ENCODE measurements at regions of chr6 and their contacts with region 1.

Region 1: GRCh38 chr6:26196846-26197648 is 109.8 kb downstream of the HFE start:
- DNase-seq: peak; percentile 92 to 93 (median 92)
- H3K4me3 ChIP-seq: peak overlapping the region; percentile 83 to 97
- H3K4me3 Mint-ChIP-seq: peak overlapping the region; percentile 94 to 99 (median 97)
- H3K27ac ChIP-seq: peak overlapping the region; percentile 84
- H3K27ac Mint-ChIP-seq: peak overlapping the region; percentile 96 to 100 (median 98)
- H3K4me1 ChIP-seq: peaks cover 43% of the 10 kb centered on the region
- H3K4me1 Mint-ChIP-seq: peaks cover 23 to 57% (median 41%) of the 10 kb centered on the region in 4 donors
- H3K27me3 ChIP-seq: no peaks in the 10 kb centered on the region
- H3K27me3 Mint-ChIP-seq: no peaks in the 10 kb centered on the region

Region 2: DNA sequence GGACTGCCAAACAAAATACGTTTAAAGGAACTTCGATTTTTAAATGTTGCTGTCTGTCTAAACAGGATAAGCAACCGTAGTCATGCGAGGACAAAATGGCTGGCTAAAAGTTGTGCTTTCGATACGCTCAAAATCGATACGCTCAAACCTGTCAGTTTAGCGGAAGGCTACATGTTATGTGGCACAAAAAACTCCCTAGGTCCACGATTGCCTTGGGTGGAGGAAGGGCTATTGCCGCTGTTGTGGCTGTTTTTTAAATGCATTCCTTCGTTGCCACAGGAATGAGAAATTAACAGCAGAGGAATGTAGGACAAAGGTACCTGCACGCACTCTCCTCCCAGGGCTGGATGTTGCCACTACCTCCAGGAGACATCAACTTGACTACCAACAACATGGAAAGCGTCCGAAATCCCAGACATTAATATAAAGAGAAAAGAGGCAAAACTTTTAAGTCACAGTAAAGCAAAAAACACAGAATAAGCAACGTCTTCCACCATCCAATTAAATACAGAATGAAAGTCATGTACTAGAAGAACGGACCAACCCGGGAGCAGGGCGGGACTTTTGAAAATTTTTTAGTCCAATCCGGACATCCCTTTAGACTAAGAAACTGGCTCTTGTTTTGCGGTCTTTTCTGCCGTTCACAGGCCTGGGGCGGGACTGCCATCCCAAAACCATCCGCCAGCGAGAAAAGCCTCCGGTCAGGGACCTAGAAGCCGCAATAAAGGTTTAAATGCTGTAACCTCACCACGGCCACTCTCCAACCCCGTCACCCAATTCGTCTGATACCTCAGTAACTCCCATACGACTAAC is 142.0 kb before region 1 on chr6:
- CTCF ChIA-PET with region 1: no interaction called
- POLR2A ChIA-PET with region 1: interaction called, 65 read pairs
- intact Hi-C with region 1: no loop called
- DNase-seq: peak; percentile 89 to 96 (median 91)
- H3K4me3 ChIP-seq: peak overlapping the region; percentile 67 to 78
- H3K4me3 Mint-ChIP-seq: peak overlapping the region; percentile 93 to 96 (median 94)
- H3K27ac ChIP-seq: peak overlapping the region; percentile 84
- H3K27ac Mint-ChIP-seq: peak overlapping the region; percentile 91 to 98 (median 98)
- H3K4me1 ChIP-seq: peaks cover 24% of the 10 kb centered on the region
- H3K4me1 Mint-ChIP-seq: peaks cover 7 to 34% (median 15%) of the 10 kb centered on the region in 4 donors
- H3K27me3 ChIP-seq: no peaks in the 10 kb centered on the region
- H3K27me3 Mint-ChIP-seq: no peaks in the 10 kb centered on the region

Region 3: DNA sequence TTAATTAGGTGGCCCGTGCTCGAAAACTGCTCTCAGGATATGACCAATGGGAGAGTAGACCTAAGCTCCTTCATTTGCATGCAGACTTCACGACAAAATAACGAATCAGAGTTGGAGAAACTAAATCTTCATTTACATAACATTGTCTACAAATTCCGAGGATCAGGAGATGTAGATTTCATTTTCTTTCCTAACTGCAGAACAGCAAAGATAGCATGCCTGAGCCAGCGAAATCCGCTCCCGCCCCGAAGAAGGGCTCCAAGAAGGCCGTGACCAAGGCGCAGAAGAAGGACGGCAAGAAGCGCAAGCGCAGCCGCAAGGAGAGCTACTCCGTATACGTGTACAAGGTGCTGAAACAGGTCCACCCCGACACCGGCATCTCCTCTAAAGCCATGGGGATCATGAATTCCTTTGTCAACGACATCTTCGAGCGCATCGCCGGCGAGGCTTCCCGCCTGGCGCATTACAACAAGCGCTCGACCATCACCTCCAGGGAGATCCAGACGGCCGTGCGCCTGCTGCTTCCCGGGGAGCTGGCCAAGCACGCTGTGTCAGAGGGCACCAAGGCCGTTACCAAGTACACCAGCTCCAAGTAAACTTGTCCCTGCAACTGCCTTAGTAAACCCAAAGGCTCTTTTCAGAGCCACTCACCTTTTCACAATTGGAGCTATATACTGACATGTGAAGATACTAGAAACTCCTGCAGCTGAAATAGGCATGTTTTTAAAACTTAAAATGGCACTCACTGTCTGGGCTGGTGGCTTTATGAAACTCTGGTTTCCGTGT is 13.3 kb before region 1 on chr6:
- CTCF ChIA-PET with region 1: interaction called, 54 read pairs
- POLR2A ChIA-PET with region 1: interaction called, 2,476 read pairs
- intact Hi-C with region 1: no loop called
- DNase-seq: peak; percentile 72 to 81 (median 79)
- H3K4me3 ChIP-seq: peak overlapping the region; percentile 2 to 69
- H3K4me3 Mint-ChIP-seq: peak overlapping the region; percentile 90 to 100 (median 96)
- H3K27ac ChIP-seq: peak overlapping the region; percentile 67
- H3K27ac Mint-ChIP-seq: peak overlapping the region; percentile 78 to 99 (median 95)
- H3K4me1 ChIP-seq: peaks cover 45% of the 10 kb centered on the region
- H3K4me1 Mint-ChIP-seq: peaks cover 29 to 54% (median 37%) of the 10 kb centered on the region in 4 donors
- H3K27me3 ChIP-seq: no peaks in the 10 kb centered on the region
- H3K27me3 Mint-ChIP-seq: no peaks in the 10 kb centered on the region

Region 4: GRCh38 chr6:26249957-26250697 is 53.1 kb after region 1 on chr6:
- CTCF ChIA-PET with region 1: interaction called, 12 read pairs
- POLR2A ChIA-PET with region 1: interaction called, 3 read pairs
- intact Hi-C with region 1: no loop called
- DNase-seq: peak; percentile 79 to 88 (median 83)
- H3K4me3 ChIP-seq: peak overlapping the region; percentile 86 to 88
- H3K4me3 Mint-ChIP-seq: peak overlapping the region; percentile 92 to 99 (median 98)
- H3K27ac ChIP-seq: peak overlapping the region; percentile 59
- H3K27ac Mint-ChIP-seq: peak overlapping the region; percentile 85 to 97 (median 94)
- H3K4me1 ChIP-seq: peaks cover 25% of the 10 kb centered on the region
- H3K4me1 Mint-ChIP-seq: peaks cover 28 to 53% (median 40%) of the 10 kb centered on the region in 4 donors
- H3K27me3 ChIP-seq: no peaks in the 10 kb centered on the region
- H3K27me3 Mint-ChIP-seq: no peaks in the 10 kb centered on the region

Region 5: DNA sequence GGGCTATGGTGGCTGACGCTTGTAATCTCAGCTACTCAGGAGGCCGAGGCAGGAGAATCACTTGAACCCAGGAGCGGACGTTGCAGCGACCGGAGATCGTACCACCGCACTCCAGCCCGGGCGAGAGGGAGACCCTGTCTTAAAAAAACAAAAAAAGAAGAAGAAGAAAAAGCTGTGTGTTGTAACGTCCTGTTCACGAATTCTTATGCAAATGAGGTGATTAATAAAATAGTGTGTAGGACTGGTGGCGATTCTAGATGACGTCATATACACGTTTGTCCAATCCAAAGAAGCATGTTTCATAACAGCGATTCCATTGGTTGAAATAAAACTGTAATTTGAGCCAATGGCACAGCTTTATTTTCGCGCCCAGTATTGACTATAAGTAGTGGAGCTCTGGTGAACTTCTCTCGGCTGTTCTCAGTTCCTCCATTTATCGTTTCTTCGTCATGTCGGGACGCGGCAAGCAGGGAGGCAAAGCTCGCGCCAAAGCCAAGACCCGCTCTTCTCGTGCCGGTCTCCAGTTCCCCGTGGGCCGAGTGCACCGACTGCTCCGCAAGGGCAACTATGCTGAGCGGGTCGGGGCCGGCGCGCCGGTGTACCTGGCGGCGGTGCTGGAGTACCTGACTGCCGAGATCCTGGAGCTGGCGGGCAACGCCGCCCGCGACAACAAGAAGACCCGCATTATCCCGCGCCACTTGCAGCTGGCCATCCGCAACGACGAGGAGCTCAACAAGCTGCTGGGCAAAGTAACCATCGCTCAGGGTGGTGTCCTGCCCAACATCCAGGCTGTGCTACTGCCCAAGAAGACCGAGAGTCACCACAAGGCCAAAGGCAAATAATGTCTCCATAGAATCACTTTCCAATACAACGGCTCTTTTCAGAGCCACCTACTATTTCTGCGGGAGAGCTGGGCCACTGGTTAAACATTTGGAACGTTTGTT is 1668.1 kb after region 1 on chr6:
- CTCF ChIA-PET with region 1: no interaction called
- POLR2A ChIA-PET with region 1: interaction called, 41 read pairs
- intact Hi-C with region 1: no loop called
- DNase-seq: peak; percentile 86 to 93 (median 91)
- H3K4me3 ChIP-seq: peak overlapping the region; percentile 33 to 69
- H3K4me3 Mint-ChIP-seq: peak overlapping the region; percentile 96 to 99 (median 99)
- H3K27ac ChIP-seq: peak overlapping the region; percentile 62
- H3K27ac Mint-ChIP-seq: peak overlapping the region; percentile 94 to 99 (median 98)
- H3K4me1 ChIP-seq: peaks cover 31% of the 10 kb centered on the region
- H3K4me1 Mint-ChIP-seq: peaks cover 18 to 46% (median 34%) of the 10 kb centered on the region in 4 donors
- H3K27me3 ChIP-seq: no peaks in the 10 kb centered on the region
- H3K27me3 Mint-ChIP-seq: no peaks in the 10 kb centered on the region